Activated CD4-positive, alpha-beta memory T cell treated with anti-CD3 and anti-CD28 coated beads, Interleukin-2, amount 10 ng/mL, durations not matched to agents 7 days and 5 days (primary cell): ENCODE measurements at regions of chr17 and their contacts with region 1.

Region 1: DNA sequence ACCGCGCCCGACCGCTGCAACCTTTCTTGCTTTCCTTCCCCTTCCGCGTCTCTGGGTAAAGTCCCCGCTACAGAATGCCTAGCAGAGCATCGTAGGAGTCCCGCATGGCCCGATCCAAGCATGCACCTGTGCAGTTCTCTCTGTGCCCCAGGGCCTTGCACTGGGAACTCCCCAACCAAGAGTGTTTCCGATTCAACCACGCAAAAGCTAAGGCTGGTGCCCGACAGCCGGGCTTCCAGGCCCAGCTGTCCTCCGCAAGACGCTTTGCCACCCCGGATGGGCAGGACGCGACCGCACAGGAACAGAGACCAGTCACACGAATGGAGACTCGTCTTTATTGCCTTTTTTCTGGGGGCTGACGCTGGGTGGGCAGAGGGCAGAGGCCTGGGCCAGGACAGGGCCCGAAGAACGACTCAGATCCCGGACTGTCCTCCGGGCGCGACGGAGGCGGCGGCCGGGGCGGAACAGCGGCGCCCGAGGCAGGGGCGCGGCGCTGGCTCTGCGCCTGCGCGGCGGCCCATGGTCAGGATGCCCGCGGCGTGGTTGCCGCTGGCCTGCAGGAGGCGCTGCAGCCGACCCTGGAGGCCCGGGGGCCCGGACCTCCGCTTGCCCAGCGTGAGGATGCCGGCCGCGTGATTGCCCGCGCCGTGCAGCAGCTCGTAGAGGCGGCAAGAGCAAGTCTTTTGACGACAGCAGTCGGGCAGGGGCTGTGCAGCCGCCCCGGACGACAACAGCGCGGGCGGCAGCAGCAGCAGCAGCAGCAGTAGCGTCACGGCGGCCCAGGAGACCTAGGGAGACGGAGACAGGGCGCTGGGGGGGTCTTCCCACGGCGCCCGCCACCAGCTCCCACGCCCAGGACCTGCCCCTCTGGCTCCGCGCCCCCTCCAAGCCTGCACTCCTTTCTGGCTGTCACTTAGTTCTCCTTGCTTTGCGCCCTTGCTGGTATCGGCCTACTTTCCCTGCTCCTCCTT is 1.2 kb downstream of the HCRT start:
- DNase-seq: peak; percentile 84
- H3K4me3 Mint-ChIP-seq: peak overlapping the region; percentile 93
- H3K27ac Mint-ChIP-seq: peak overlapping the region; percentile 85
- H3K4me1 Mint-ChIP-seq: peaks cover 50% of the 10 kb centered on the region
- H3K27me3 Mint-ChIP-seq: peaks cover 16% of the 10 kb centered on the region

Region 2: DNA sequence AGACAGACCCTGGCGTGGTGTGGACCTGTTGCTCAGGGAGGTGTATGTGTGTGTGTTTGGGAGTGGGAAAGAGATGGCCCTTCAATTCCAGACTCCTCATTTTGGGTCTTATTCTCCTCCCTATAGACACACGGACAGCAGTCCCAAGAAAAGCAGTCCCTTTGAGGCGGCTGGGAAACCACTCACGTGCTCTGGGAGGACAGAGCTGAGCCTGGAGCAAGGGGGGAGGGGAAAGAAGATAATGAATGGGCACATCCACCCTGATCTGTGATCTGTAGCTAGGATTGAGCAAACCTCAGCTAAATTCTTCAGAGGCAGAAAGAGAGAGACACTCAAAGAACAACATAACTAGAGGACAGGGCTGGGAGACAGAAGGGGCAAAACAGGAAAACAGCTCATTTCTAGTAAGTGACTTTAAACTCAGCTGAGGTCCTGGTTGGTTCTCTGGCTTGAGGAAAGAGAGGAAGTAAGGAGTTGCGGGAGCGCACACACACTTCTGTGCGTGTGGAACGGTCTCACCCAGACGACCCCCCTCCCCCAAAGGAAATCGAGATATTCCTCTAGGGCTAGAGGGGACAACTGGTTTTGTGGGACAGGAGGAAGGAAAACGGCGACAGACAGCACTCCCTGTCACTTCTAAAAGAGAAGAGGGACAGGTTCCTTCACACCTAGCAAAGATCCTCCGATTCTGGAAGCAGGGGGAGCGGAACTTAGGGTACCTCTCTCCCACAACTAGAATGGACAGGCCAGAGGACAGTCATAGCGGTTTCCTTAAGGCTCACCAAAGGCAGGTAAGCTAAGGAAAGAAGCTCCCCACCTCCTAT is 29.9 kb before region 1 on chr17:
- CTCF ChIA-PET with region 1: interaction called, 6 read pairs
- POLR2A ChIA-PET with region 1: interaction called, 26 read pairs
- DNase-seq: no peak
- H3K4me3 Mint-ChIP-seq: peak overlapping the region; percentile 92
- H3K27ac Mint-ChIP-seq: peak overlapping the region; percentile 86
- H3K4me1 Mint-ChIP-seq: peaks cover 45% of the 10 kb centered on the region
- H3K27me3 Mint-ChIP-seq: no peaks in the 10 kb centered on the region

Region 3: DNA sequence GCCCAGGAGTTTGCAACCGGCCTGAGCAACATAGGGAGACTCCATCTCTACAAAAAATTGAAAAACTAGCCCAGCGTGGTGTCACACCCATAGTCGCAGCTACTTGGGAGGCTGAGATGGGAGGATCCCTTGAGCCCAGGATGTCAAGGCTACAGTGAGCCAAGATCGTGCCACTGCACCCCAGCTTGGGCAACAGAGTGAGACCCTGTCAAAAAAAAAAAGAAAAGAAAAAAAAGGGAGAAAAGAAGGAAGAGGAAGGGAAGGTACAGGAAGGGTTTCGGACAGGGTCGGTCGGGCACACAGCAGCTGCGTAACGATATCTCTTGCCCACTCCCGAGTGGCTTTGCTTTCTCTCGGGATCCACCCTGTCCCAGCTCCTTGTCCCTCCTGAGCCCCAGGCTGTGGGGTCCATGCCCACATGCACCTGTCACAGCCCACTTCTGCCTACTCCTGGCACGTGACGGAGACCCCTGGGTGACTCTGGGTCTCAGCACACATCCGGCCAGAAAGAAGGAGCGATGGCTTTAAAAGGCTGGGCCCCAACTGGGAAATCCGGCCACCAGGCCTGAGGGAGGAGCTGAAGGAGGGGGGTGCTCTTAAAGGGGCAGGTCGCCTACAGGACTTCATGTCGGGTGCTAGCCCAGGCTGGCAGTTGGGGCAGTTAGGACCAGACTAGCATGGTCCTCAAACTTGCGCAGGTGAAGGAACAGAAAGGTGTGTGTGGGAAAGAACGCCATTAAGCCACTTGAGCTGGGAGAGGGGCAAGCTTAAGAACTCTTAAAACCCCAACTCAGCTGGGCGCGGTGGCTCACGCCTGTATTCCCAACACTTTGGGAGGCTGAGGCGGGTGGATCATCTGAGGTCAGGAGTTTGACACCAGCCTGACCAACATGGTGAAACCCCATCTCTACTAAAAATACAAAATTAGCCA is 10.2 kb after region 1 on chr17 and contains the start of gene GHDC:
- CTCF ChIA-PET with region 1: interaction called, 38 read pairs
- POLR2A ChIA-PET with region 1: interaction called, 27 read pairs
- DNase-seq: peak; percentile 86
- H3K4me3 Mint-ChIP-seq: peak within 1 kb of the TSS; percentile 87
- H3K27ac Mint-ChIP-seq: peak within 1 kb of the TSS; percentile 84
- H3K4me1 Mint-ChIP-seq: peaks cover 21% of the 10 kb centered on the region
- H3K27me3 Mint-ChIP-seq: no peaks in the 10 kb centered on the region
- total RNA-seq, gene GHDC: 17.3 to 19.1 TPM